HepG2 (cell line): ENCODE measurements at regions of chr14 and their contacts with region 1.

Region 1: DNA sequence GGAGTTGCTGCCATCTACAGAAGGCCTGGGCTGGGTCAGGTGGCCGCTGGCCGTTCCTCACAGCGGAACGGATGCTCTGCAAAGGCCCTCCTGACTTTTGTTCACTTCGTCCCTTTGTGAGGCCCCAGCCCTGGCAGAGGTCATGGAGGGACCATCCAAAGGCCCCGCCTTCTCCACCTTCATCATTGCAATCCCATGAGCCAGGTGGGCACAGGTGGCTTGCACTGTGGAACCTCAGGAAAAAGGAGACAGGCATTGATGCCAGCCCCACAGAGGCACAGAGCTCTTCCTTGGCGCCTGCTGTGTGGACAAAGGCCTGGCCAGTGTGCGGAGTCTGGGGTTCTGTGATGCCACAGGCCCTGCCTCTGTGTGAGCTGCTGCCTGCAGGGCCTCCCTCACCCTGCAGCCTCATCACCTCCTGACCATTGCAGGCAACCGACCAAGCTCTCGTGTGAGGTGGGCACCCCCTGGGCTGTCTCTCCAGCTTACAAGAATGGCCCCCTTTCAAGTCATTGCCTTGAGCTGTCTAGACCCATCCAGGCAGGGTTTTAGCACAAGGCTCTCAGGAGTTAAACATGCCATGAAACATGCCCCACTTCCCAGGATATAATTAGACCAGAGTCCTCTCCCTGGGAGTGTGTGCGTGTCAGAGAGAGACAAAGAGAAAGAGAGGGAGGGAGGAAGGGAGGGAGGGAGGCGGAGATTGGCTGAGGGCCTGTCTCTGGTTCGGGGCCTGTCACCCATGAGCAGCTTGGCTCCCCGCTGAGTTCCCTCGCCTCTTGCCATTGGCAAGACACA is 19.3 kb downstream of the NFKBIA start:
- DNase-seq: peak; percentile 85
- ATAC-seq: peak; percentile 83
- H3K4me3 ChIP-seq: peak overlapping the region; percentile 41 to 73 (median 44)
- H3K27ac ChIP-seq: peak overlapping the region; percentile 29
- H3K4me1 ChIP-seq: peaks cover 52% of the 10 kb centered on the region
- H3K27me3 ChIP-seq: no peaks in the 10 kb centered on the region
- CTCF ChIP-seq: peak; percentile 10; the same call in 1 of the 2 replicates
- EP300 ChIP-seq: peak; percentile 17 to 30; a peak in 2 of 4 replicates
- POLR2A ChIP-seq: peak in 1 of 2 experiments; percentile 59; a peak in 2 of 4 replicates
- RAD21 ChIP-seq: no peak

Region 2: DNA sequence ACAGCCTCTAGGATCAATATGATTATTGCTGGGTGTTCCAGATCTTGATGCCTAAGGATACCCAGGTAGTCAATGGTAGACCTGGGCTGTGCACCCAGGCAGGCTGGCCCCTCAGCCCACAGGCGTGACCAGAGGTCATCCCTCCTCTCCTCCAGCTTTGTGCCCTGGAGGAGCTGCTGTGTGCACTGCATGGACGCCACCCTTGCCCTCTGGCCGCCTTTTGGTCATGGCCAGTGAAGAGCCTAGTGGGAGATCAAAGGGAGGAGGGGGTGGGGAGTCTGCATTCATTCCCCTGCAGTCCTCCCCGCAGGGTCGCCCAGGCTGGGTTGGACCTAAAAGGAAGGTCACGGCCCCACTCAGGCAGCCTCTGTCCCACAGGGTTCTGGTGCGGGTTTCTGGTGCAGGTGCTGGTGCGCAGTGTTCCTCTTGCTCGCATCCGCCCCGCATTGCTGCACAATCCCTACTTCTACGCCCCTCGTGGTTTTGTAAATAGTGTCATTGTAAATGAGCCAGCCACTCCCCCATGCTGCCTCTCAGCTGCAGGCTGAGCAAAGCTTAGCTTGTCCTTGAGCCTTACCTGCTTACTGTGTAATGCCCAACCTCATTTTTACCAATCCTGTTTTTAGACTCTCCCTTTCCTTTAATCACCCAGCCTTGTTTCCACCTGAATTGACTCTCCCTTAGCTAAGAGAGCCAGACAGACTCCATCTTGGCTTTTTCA is 37.8 kb before region 1 on chr14:
- CTCF ChIA-PET with region 1: interaction called, 4 read pairs
- POLR2A ChIA-PET with region 1: interaction called, 14 read pairs
- in situ Hi-C with region 1: no loop called
- intact Hi-C with region 1: loop called (anchors 2 kb)
- DNase-seq: peak; percentile 99
- ATAC-seq: peak; percentile 94
- H3K4me3 ChIP-seq: peak overlapping the region; percentile 12 to 69 (median 52)
- H3K27ac ChIP-seq: peak overlapping the region; percentile 72
- H3K4me1 ChIP-seq: peaks cover 75% of the 10 kb centered on the region
- H3K27me3 ChIP-seq: no peaks in the 10 kb centered on the region; a peak in 1 of 5 replicates
- CTCF ChIP-seq: peak; percentile 38
- EP300 ChIP-seq: peak; percentile 91 to 96
- POLR2A ChIP-seq: peak in 1 of 2 experiments; percentile 77; a peak in 2 of 4 replicates
- RAD21 ChIP-seq: peak; percentile 70

Region 3: GRCh38 chr14:35365130-35366055 is 19.8 kb before region 1 on chr14:
- CTCF ChIA-PET with region 1: no interaction called
- POLR2A ChIA-PET with region 1: interaction called, 25 read pairs
- in situ Hi-C with region 1: no loop called
- intact Hi-C with region 1: no loop called
- DNase-seq: peak; percentile 98
- ATAC-seq: peak; percentile 87
- H3K4me3 ChIP-seq: peak overlapping the region in 2 of 3 experiments; percentile 1 to 38; a peak in 2 of 6 replicates
- H3K27ac ChIP-seq: no peak overlapping the region
- H3K4me1 ChIP-seq: peaks cover 61% of the 10 kb centered on the region
- H3K27me3 ChIP-seq: 0 out of 5 replicates have a peak, but pooled peaks cover 0 to 6% of the 10 kb centered on the region in 2 experiments
- CTCF ChIP-seq: no peak; the same call in 1 of the 2 replicates
- EP300 ChIP-seq: peak; percentile 73 to 75; a peak in 3 of 4 replicates
- POLR2A ChIP-seq: 0 out of 4 replicates have a peak, but pooled peaks of 1 of the 2 experiments have one; percentile 28
- RAD21 ChIP-seq: peak; percentile 35; the same call in 1 of the 2 replicates

Region 4: GRCh38 chr14:35374273-35374681 is 11.0 kb before region 1 on chr14:
- CTCF ChIA-PET with region 1: no interaction called
- POLR2A ChIA-PET with region 1: interaction called, 25 read pairs
- in situ Hi-C with region 1: no loop called
- intact Hi-C with region 1: no loop called
- DNase-seq: peak; percentile 89
- ATAC-seq: peak; percentile 6; the same call in 2 of the 3 replicates
- H3K4me3 ChIP-seq: no peak overlapping the region
- H3K27ac ChIP-seq: no peak overlapping the region
- H3K4me1 ChIP-seq: peaks cover 48% of the 10 kb centered on the region
- H3K27me3 ChIP-seq: no peaks in the 10 kb centered on the region
- CTCF ChIP-seq: no peak
- EP300 ChIP-seq: peak; percentile 63 to 91
- POLR2A ChIP-seq: no peak
- RAD21 ChIP-seq: no peak

Region 5: DNA sequence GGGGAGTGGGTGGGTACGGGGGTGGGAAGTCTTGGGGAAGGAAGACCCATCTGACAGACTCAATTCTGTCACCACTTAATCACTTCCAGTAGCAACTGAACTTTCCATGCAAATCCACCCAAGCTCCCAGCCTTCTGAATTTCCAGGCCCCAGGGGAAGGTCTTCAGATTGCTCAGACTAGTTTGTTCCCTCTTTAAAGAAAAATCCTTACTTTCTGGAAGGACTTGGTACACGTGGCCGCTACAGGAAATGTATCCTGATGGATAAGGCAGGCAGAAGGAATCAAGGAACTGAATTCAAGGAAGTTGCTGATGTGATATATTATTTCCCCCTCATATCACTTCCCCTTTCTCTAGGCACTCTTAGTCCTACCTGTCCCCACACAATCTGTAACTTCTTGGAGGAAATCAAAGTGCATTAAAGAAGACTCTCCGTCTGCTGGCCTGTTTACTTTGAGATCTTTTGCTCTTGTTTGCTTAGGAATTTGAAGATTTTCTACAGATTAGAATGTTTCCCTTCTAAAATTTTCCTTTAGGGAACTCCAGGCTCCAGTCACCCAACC is 12.9 kb after region 1 on chr14:
- CTCF ChIA-PET with region 1: no interaction called
- POLR2A ChIA-PET with region 1: interaction called, 211 read pairs
- in situ Hi-C with region 1: no loop called
- intact Hi-C with region 1: no loop called
- DNase-seq: no peak
- ATAC-seq: peak; percentile 4
- H3K4me3 ChIP-seq: no peak overlapping the region; a peak in 1 of 6 replicates
- H3K27ac ChIP-seq: no peak overlapping the region
- H3K4me1 ChIP-seq: peaks cover 79% of the 10 kb centered on the region
- H3K27me3 ChIP-seq: no peaks in the 10 kb centered on the region; a peak in 1 of 5 replicates
- CTCF ChIP-seq: no peak
- EP300 ChIP-seq: no peak
- POLR2A ChIP-seq: no peak
- RAD21 ChIP-seq: no peak

Region 6: GRCh38 chr14:35438910-35439713 is 53.9 kb after region 1 on chr14:
- CTCF ChIA-PET with region 1: no interaction called
- POLR2A ChIA-PET with region 1: no interaction called
- in situ Hi-C with region 1: no loop called
- intact Hi-C with region 1: no loop called
- DNase-seq: peak; percentile 52
- ATAC-seq: peak; percentile 75
- H3K4me3 ChIP-seq: no peak overlapping the region
- H3K27ac ChIP-seq: no peak overlapping the region
- H3K4me1 ChIP-seq: no peaks in the 10 kb centered on the region
- H3K27me3 ChIP-seq: no peaks in the 10 kb centered on the region
- CTCF ChIP-seq: peak; percentile 70
- EP300 ChIP-seq: no peak
- POLR2A ChIP-seq: no peak
- RAD21 ChIP-seq: no peak; the same call in 1 of the 2 replicates

Region 7: DNA sequence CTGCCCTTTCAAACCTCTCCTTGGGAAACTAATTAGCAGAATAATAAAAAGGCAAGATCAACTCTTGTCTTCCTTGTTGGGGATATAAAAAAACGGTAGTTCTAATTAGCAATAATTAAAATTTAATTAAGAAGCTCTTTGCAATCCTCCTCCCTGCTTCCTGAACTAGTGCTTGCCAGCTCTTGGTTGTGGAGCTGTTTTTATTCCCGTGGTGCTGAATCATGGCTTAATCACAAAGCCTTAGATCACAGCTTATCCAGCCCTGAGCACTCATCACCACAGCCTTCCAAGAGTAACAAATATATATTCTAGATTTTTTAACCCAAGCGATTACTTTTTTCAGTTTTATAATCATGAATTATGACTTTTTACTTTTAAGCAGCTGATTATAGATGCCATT is 85.5 kb after region 1 on chr14:
- CTCF ChIA-PET with region 1: no interaction called
- POLR2A ChIA-PET with region 1: no interaction called
- in situ Hi-C with region 1: no loop called
- intact Hi-C with region 1: no loop called
- DNase-seq: no peak
- ATAC-seq: no peak
- H3K4me3 ChIP-seq: no peak overlapping the region
- H3K27ac ChIP-seq: no peak overlapping the region
- H3K4me1 ChIP-seq: no peaks in the 10 kb centered on the region
- H3K27me3 ChIP-seq: no peaks in the 10 kb centered on the region
- CTCF ChIP-seq: no peak
- EP300 ChIP-seq: no peak
- POLR2A ChIP-seq: no peak
- RAD21 ChIP-seq: no peak